IMR-90 (cell line): ENCODE measurements at regions of chr6 and their contacts with region 1.

Region 1: GRCh38 chr6:144582939-144583613 is 297.9 kb downstream of the UTRN start:
- DNase-seq: peak; percentile 30
- ATAC-seq: peak; percentile 67
- H3K4me3 ChIP-seq: peak overlapping the region; percentile 11; the same call in 1 of the 2 replicates
- H3K27ac ChIP-seq: no peak overlapping the region
- H3K4me1 ChIP-seq: peaks cover 4% of the 10 kb centered on the region
- H3K27me3 ChIP-seq: no peaks in the 10 kb centered on the region
- CTCF ChIP-seq: no peak
- POLR2A ChIP-seq: no peak
- RAD21 ChIP-seq: no peak

Region 2: GRCh38 chr6:144912474-144912873 is 329.4 kb after region 1 on chr6:
- CTCF ChIA-PET with region 1: no interaction called
- POLR2A ChIA-PET with region 1: no interaction called
- dilution Hi-C with region 1: no loop called
- in situ Hi-C with region 1: no loop called
- intact Hi-C with region 1: loop called (anchors 5 kb)
- DNase-seq: peak; percentile 90
- ATAC-seq: peak; percentile 88
- H3K4me3 ChIP-seq: no peak overlapping the region
- H3K27ac ChIP-seq: no peak overlapping the region
- H3K4me1 ChIP-seq: peaks cover 7% of the 10 kb centered on the region
- H3K27me3 ChIP-seq: no peaks in the 10 kb centered on the region
- CTCF ChIP-seq: peak; percentile 21; the same call in 1 of the 2 replicates
- POLR2A ChIP-seq: no peak
- RAD21 ChIP-seq: 0 out of 2 replicates have a peak, but pooled peaks have one; percentile 4

Region 3: DNA sequence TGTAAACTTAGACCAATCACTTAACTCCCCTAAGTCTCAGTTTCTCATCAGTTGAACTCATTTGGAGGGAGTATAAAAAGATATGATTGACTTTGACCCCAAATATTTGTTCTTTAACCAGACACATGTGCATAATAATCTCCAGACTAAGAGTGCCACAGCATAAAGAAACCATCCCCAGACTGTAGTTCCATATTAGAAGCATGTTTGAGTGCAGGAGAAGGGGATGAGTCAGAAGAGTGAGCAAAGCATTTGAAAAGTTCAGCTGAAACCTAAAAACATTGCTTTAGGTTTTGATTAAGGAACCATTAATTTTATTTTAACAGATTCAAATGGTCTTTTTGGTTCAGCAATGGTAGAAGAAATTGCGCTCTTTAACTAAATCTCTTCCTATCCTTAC is 356.8 kb after region 1 on chr6:
- CTCF ChIA-PET with region 1: no interaction called
- POLR2A ChIA-PET with region 1: no interaction called
- dilution Hi-C with region 1: no loop called
- in situ Hi-C with region 1: loop called (anchors 5 kb)
- intact Hi-C with region 1: no loop called
- DNase-seq: peak; percentile 54
- ATAC-seq: peak; percentile 74; the same call in 1 of the 2 replicates
- H3K4me3 ChIP-seq: no peak overlapping the region
- H3K27ac ChIP-seq: no peak overlapping the region
- H3K4me1 ChIP-seq: peaks cover 1% of the 10 kb centered on the region; the same call in 1 of the 2 replicates
- H3K27me3 ChIP-seq: no peaks in the 10 kb centered on the region
- CTCF ChIP-seq: no peak
- POLR2A ChIP-seq: no peak
- RAD21 ChIP-seq: no peak

Region 4: DNA sequence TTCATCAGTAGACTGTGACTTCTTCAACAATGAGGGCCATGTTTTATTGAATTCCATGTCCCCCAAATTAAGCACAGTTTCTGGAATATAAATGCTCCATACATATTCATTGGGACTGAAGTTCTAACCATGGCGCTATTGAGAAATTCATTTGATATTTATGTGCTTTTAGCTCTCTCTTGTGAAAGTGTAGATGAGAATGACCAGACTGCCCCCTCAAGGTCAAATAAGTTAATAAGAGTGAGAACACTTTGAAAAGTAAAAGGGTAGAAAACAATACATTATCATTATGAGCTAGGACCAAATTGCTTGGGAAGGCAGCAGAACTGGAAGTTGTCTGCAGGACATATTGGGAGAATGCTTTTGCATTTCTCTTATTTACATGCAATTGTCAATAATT is 554.4 kb after region 1 on chr6:
- CTCF ChIA-PET with region 1: no interaction called
- POLR2A ChIA-PET with region 1: no interaction called
- dilution Hi-C with region 1: no loop called
- in situ Hi-C with region 1: loop called (anchors 10 kb)
- intact Hi-C with region 1: loop called (anchors 1 kb)
- DNase-seq: peak; percentile 38
- ATAC-seq: peak; percentile 35; the same call in 1 of the 2 replicates
- H3K4me3 ChIP-seq: no peak overlapping the region
- H3K27ac ChIP-seq: no peak overlapping the region
- H3K4me1 ChIP-seq: 0 out of 2 replicates have a peak, but pooled peaks cover 1% of the 10 kb centered on the region
- H3K27me3 ChIP-seq: no peaks in the 10 kb centered on the region
- CTCF ChIP-seq: peak; percentile 43
- POLR2A ChIP-seq: no peak
- RAD21 ChIP-seq: peak; percentile 53

Region 5: GRCh38 chr6:145704143-145704781 is 1121.2 kb after region 1 on chr6:
- CTCF ChIA-PET with region 1: no interaction called
- POLR2A ChIA-PET with region 1: no interaction called
- dilution Hi-C with region 1: no loop called
- in situ Hi-C with region 1: loop called (anchors 10 kb)
- intact Hi-C with region 1: loop called (anchors 5 kb)
- DNase-seq: peak; percentile 38
- ATAC-seq: no peak
- H3K4me3 ChIP-seq: no peak overlapping the region
- H3K27ac ChIP-seq: no peak overlapping the region
- H3K4me1 ChIP-seq: peaks cover 2% of the 10 kb centered on the region; the same call in 1 of the 2 replicates
- H3K27me3 ChIP-seq: no peaks in the 10 kb centered on the region
- CTCF ChIP-seq: peak; percentile 54
- POLR2A ChIP-seq: no peak
- RAD21 ChIP-seq: peak; percentile 54